H1 (cell line): ENCODE measurements at regions of chr1 and their contacts with region 1.

Region 1: GRCh38 chr1:156136970-156137483 is 16.4 kb upstream of the SEMA4A start:
- DNase-seq: peak in 1 of 2 experiments; percentile 67
- H3K4me3 ChIP-seq: no peak overlapping the region
- H3K27ac ChIP-seq: no peak overlapping the region
- H3K4me1 ChIP-seq: peaks cover 0 to 6% (median 4%) of the 10 kb centered on the region in 4 experiments; a peak in 4 of 7 replicates
- H3K27me3 ChIP-seq: no peaks in the 10 kb centered on the region
- CTCF ChIP-seq: peak; percentile 59 to 71 (median 65)
- EP300 ChIP-seq: no peak
- POLR2A ChIP-seq: no peak
- RAD21 ChIP-seq: peak; percentile 32 to 51; a peak in 3 of 4 replicates

Region 2: GRCh38 chr1:156055281-156055645 is 81.8 kb before region 1 on chr1:
- CTCF ChIA-PET with region 1: no interaction called
- POLR2A ChIA-PET with region 1: no interaction called
- DNase-seq: no peak
- H3K4me3 ChIP-seq: peak overlapping the region; percentile 93 to 99 (median 96)
- H3K27ac ChIP-seq: no peak overlapping the region
- H3K4me1 ChIP-seq: peaks cover 0 to 6% (median 0%) of the 10 kb centered on the region in 4 experiments; a peak in 2 of 7 replicates
- H3K27me3 ChIP-seq: no peaks in the 10 kb centered on the region
- CTCF ChIP-seq: no peak
- EP300 ChIP-seq: no peak
- POLR2A ChIP-seq: no peak
- RAD21 ChIP-seq: no peak

Region 3: DNA sequence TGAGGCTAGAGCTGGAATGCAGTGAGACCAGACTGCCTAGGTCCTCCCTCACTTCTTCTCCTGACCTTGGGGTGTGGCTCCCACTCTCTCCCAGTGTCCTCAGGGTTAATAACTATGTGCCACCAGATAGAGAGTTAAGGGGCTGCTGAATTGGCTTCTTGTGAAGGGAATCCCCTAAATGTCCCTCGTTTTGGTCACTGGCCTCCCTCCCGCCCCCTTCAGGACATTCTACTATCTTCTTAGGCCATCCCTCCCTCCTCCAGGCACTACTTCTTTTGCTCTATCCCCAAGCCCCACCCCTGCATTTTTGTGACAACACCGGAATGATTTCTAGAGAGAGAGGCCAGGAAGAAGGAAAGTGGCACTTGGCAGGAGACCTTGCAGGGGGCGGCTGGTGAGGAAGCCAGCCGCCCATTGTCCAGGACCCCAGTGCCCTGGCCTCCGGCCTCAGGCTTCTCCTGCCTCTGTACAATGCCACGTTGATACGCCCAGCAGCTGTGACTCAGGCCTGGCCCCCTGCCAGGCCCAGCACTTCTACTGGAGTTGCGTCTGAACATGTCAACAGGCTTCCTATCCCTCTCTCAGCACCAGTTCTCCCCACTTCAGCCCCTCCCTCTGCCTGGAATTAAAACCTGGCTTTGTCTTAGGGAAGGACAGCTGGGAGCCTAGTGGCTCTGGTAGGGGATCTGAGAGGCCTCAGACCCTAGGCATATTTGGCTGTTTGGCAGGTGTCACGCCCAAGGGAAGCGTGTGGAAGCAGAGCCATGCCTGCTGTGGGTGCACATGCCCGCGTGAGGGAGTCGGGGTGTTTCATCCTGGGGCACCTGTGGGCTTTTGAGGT is 13.5 kb before region 1 on chr1:
- CTCF ChIA-PET with region 1: interaction called, 261 read pairs
- POLR2A ChIA-PET with region 1: interaction called, 143 read pairs
- DNase-seq: peak in 1 of 2 experiments; percentile 76
- H3K4me3 ChIP-seq: peak overlapping the region in 2 of 4 experiments; percentile 5 to 35; a peak in 4 of 8 replicates
- H3K27ac ChIP-seq: peak overlapping the region; percentile 82
- H3K4me1 ChIP-seq: peaks cover 7 to 33% (median 22%) of the 10 kb centered on the region in 4 experiments
- H3K27me3 ChIP-seq: no peaks in the 10 kb centered on the region
- CTCF ChIP-seq: peak; percentile 21 to 54 (median 35); a peak in 2 of 4 replicates
- EP300 ChIP-seq: no peak
- POLR2A ChIP-seq: peak in 1 of 2 experiments; percentile 72; a peak in 2 of 3 replicates
- RAD21 ChIP-seq: peak in 1 of 2 experiments; percentile 4; a peak in 1 of 4 replicates

Region 4: GRCh38 chr1:156198831-156199349 is 61.9 kb after region 1 on chr1:
- CTCF ChIA-PET with region 1: interaction called, 28 read pairs
- POLR2A ChIA-PET with region 1: interaction called, 3 read pairs
- DNase-seq: no peak
- H3K4me3 ChIP-seq: no peak overlapping the region
- H3K27ac ChIP-seq: no peak overlapping the region
- H3K4me1 ChIP-seq: peaks cover 0 to 16% (median 3%) of the 10 kb centered on the region in 4 experiments; a peak in 4 of 7 replicates
- H3K27me3 ChIP-seq: no peaks in the 10 kb centered on the region
- CTCF ChIP-seq: no peak
- EP300 ChIP-seq: no peak
- POLR2A ChIP-seq: no peak
- RAD21 ChIP-seq: no peak